Activated CD8-positive, alpha-beta T cell treated with anti-CD3 and anti-CD28 coated beads for 36 hours (primary cell): ENCODE measurements at regions of chr21 and their contacts with region 1.

Region 1: GRCh38 chr21:25464275-25464674 is 143.0 kb downstream of the MRPL39 start:
- DNase-seq: peak; percentile 48
- ATAC-seq: peak; percentile 74
- H3K4me3 Mint-ChIP-seq: peak overlapping the region; percentile 49
- H3K27ac Mint-ChIP-seq: peak overlapping the region; percentile 98
- H3K4me1 Mint-ChIP-seq: peaks cover 76% of the 10 kb centered on the region
- H3K27me3 Mint-ChIP-seq: no peaks in the 10 kb centered on the region
- CTCF ChIP-seq: no peak

Region 2: GRCh38 chr21:25449950-25450349 is 14.3 kb before region 1 on chr21:
- CTCF ChIA-PET with region 1: no interaction called
- POLR2A ChIA-PET with region 1: no interaction called
- intact Hi-C with region 1: no loop called
- DNase-seq: no peak
- ATAC-seq: no peak
- H3K4me3 Mint-ChIP-seq: no peak overlapping the region
- H3K27ac Mint-ChIP-seq: no peak overlapping the region
- H3K4me1 Mint-ChIP-seq: peaks cover 38% of the 10 kb centered on the region
- H3K27me3 Mint-ChIP-seq: no peaks in the 10 kb centered on the region
- CTCF ChIP-seq: no peak

Region 3: DNA sequence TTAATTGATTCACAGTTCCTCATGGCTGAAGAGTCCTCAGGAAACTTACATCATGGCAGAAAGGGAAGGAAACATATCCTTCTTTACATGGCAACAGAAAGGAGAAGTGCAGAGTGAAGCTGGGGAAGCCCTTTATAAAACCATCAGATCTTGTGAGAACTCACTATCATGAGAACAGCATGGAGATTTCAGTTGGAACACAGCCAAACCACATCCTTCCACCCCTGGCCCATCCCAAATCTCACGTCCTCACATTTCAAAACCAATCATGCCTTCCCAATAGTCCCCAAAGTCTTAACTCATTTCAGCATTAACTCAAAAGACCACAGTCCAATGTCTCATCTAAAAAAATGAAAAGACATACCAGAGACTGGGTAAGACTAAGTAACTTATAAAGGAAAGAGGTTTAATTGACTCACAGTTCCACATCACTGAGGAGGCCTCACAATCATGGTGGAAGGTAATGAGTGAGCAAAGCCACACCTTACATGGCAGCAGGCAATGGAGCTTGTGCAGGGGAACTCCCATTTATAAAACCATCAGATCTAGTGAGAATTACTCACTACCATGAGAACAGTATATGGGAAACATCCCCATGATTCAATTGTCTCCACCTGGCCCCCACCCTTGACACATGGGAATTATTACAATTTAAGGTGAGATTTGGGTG is 37.9 kb after region 1 on chr21:
- CTCF ChIA-PET with region 1: no interaction called
- POLR2A ChIA-PET with region 1: interaction called, 5 read pairs
- intact Hi-C with region 1: loop called (anchors 5 kb)
- DNase-seq: peak; percentile 79
- ATAC-seq: peak; percentile 92
- H3K4me3 Mint-ChIP-seq: peak overlapping the region; percentile 50
- H3K27ac Mint-ChIP-seq: peak overlapping the region; percentile 99
- H3K4me1 Mint-ChIP-seq: peaks cover 69% of the 10 kb centered on the region
- H3K27me3 Mint-ChIP-seq: no peaks in the 10 kb centered on the region
- CTCF ChIP-seq: no peak

Region 4: DNA sequence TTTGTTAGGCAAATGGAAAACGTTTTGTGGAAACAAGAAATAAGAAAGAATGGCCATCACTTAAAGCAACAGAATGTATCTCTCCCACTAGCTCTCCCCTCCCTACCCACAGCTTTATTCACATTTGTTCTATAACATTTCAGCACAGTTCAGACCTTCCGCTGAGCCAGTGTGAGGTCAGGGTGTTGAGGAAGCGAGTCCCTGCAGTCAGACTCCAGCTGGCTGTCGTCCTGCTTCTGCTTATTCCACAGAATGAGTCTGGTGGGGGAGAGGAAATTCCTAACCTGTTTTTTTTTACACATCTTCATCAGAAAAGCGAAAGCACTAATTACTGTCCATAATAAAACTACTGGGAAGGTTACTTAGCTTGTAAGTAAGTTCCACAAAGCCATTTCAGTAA is 104.0 kb after region 1 on chr21:
- CTCF ChIA-PET with region 1: no interaction called
- POLR2A ChIA-PET with region 1: interaction called, 117 read pairs
- intact Hi-C with region 1: no loop called
- DNase-seq: peak; percentile 42
- ATAC-seq: no peak
- H3K4me3 Mint-ChIP-seq: peak overlapping the region; percentile 83
- H3K27ac Mint-ChIP-seq: peak overlapping the region; percentile 98
- H3K4me1 Mint-ChIP-seq: peaks cover 39% of the 10 kb centered on the region
- H3K27me3 Mint-ChIP-seq: no peaks in the 10 kb centered on the region
- CTCF ChIP-seq: no peak

Region 5: GRCh38 chr21:25647647-25648046 is 183.4 kb after region 1 on chr21:
- CTCF ChIA-PET with region 1: no interaction called
- POLR2A ChIA-PET with region 1: no interaction called
- intact Hi-C with region 1: no loop called
- DNase-seq: no peak
- ATAC-seq: no peak
- H3K4me3 Mint-ChIP-seq: no peak overlapping the region
- H3K27ac Mint-ChIP-seq: no peak overlapping the region
- H3K4me1 Mint-ChIP-seq: no peaks in the 10 kb centered on the region
- H3K27me3 Mint-ChIP-seq: no peaks in the 10 kb centered on the region
- CTCF ChIP-seq: no peak